ENCODE measurements at regions of chrX and their contacts with region 1.

Region 1: GRCh38 chrX:56802921-56803849 is 74.1 kb downstream of the NBDY start:
- DNase-seq: peak; percentile 67
- H3K4me3 ChIP-seq: peak overlapping the region; percentile 31 to 62 (median 58)
- H3K27ac ChIP-seq: no peak overlapping the region
- H3K4me1 ChIP-seq: peaks cover 19% of the 10 kb centered on the region
- H3K27me3 ChIP-seq: no peaks in the 10 kb centered on the region
- CTCF ChIP-seq: peak; percentile 71 to 75

Region 2: GRCh38 chrX:56729152-56729850 is 73.9 kb before region 1 on chrX and contains the start of gene NBDY:
- CTCF ChIA-PET with region 1: no interaction called
- dilution Hi-C with region 1: no loop called
- in situ Hi-C with region 1: no loop called
- intact Hi-C with region 1: no loop called
- DNase-seq: peak; percentile 60
- H3K4me3 ChIP-seq: peak within 1 kb of the TSS; percentile 53 to 72 (median 69)
- H3K27ac ChIP-seq: peak within 1 kb of the TSS; percentile 65
- H3K4me1 ChIP-seq: no peaks in the 10 kb centered on the region
- H3K27me3 ChIP-seq: no peaks in the 10 kb centered on the region
- CTCF ChIP-seq: no peak
- total RNA-seq, gene NBDY: 12.5 to 54.3 TPM

Region 3: GRCh38 chrX:56968980-56969379 is 165.8 kb after region 1 on chrX:
- CTCF ChIA-PET with region 1: no interaction called
- dilution Hi-C with region 1: no loop called
- in situ Hi-C with region 1: loop called in 1 of 2 experiments (anchors 25 kb)
- intact Hi-C with region 1: no loop called
- DNase-seq: no peak
- H3K4me3 ChIP-seq: no peak overlapping the region
- H3K27ac ChIP-seq: no peak overlapping the region
- H3K4me1 ChIP-seq: no peaks in the 10 kb centered on the region
- H3K27me3 ChIP-seq: peaks cover 2% of the 10 kb centered on the region
- CTCF ChIP-seq: no peak

Region 4: GRCh38 chrX:56978172-56978571 is 175.0 kb after region 1 on chrX:
- CTCF ChIA-PET with region 1: no interaction called
- dilution Hi-C with region 1: loop called (anchors 25 kb)
- in situ Hi-C with region 1: loop called (anchors 25 kb)
- intact Hi-C with region 1: loop called (anchors 1 kb)
- DNase-seq: peak; percentile 63
- H3K4me3 ChIP-seq: no peak overlapping the region
- H3K27ac ChIP-seq: no peak overlapping the region
- H3K4me1 ChIP-seq: no peaks in the 10 kb centered on the region
- H3K27me3 ChIP-seq: no peaks in the 10 kb centered on the region
- CTCF ChIP-seq: peak; percentile 74 to 78

Region 5: GRCh38 chrX:57137501-57137900 is 334.3 kb after region 1 on chrX:
- CTCF ChIA-PET with region 1: no interaction called
- dilution Hi-C with region 1: no loop called
- in situ Hi-C with region 1: no loop called
- intact Hi-C with region 1: loop called (anchors 10 kb)
- DNase-seq: no peak
- H3K4me3 ChIP-seq: no peak overlapping the region
- H3K27ac ChIP-seq: no peak overlapping the region
- H3K4me1 ChIP-seq: no peaks in the 10 kb centered on the region
- H3K27me3 ChIP-seq: no peaks in the 10 kb centered on the region
- CTCF ChIP-seq: no peak

Region 6: GRCh38 chrX:57453901-57454300 is 650.7 kb after region 1 on chrX:
- CTCF ChIA-PET with region 1: no interaction called
- dilution Hi-C with region 1: no loop called
- in situ Hi-C with region 1: no loop called
- intact Hi-C with region 1: loop called (anchors 10 kb)
- DNase-seq: peak; percentile 13
- H3K4me3 ChIP-seq: no peak overlapping the region
- H3K27ac ChIP-seq: no peak overlapping the region
- H3K4me1 ChIP-seq: no peaks in the 10 kb centered on the region
- H3K27me3 ChIP-seq: peaks cover 1% of the 10 kb centered on the region
- CTCF ChIP-seq: peak; percentile 54 to 71

Region 7: GRCh38 chrX:57595381-57595811 is 792.2 kb after region 1 on chrX:
- CTCF ChIA-PET with region 1: no interaction called
- dilution Hi-C with region 1: no loop called
- in situ Hi-C with region 1: no loop called
- intact Hi-C with region 1: loop called (anchors 10 kb)
- DNase-seq: peak; percentile 77
- H3K4me3 ChIP-seq: peak overlapping the region in 2 of 3 experiments; percentile 30 to 38
- H3K27ac ChIP-seq: peak overlapping the region; percentile 76
- H3K4me1 ChIP-seq: peaks cover 15% of the 10 kb centered on the region
- H3K27me3 ChIP-seq: no peaks in the 10 kb centered on the region
- CTCF ChIP-seq: no peak

Region 8: GRCh38 chrX:58025979-58026378 is 1222.8 kb after region 1 on chrX:
- CTCF ChIA-PET with region 1: no interaction called
- dilution Hi-C with region 1: no loop called
- in situ Hi-C with region 1: no loop called
- intact Hi-C with region 1: loop called (anchors 10 kb)
- DNase-seq: peak; percentile 9
- H3K4me3 ChIP-seq: no peak overlapping the region
- H3K27ac ChIP-seq: no peak overlapping the region
- H3K4me1 ChIP-seq: no peaks in the 10 kb centered on the region
- H3K27me3 ChIP-seq: no peaks in the 10 kb centered on the region
- CTCF ChIP-seq: peak; percentile 53 to 76

Measured in mammary epithelial cell (primary cell).